CD8-positive, alpha-beta T cell (primary cell): ENCODE measurements at regions of chr19 and their contacts with region 1.

Region 1: DNA sequence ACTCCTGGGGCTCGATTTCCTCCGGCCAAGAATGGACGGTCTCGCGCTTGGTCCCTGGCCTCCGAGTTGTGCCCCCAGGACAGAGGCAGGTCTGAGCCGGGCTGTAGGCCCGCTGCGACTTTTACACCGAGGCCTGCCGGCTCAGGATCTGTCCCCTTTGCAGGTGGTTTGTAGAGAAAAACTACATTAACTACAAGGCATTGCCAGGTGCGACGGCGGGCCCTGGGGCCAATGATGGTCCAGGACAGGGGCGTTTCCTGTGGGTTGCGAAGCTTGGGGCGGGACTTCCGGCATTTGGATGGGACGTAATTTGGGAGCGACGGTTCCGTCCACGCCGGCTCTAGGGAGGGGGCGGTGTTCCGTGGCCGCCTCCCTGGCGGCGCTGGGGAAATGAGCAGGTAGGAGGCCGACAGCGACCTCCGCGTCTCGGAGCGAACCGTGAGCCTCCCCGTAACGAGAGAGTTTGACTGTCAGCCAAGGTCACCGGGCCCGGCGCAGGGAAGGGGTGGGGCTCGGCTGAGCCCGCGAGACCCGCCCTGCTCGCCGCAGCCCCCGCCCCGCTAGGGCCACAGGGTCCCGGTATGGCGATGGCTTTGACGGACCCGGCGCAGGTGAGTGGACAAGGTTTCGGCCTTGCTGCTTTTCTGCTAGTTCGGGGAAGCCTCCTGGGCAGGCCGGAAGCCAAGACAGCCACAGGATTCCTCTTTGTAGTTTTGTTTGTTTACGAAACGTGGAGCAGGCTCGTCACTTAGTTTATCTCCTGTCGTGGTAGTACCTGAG is at the start of gene ZNF805:
- DNase-seq: peak; percentile 91 to 98 (median 97)
- ATAC-seq: peak; percentile 89
- H3K4me3 ChIP-seq: peak within 1 kb of the TSS; percentile 70 to 88
- H3K4me3 Mint-ChIP-seq: peak within 1 kb of the TSS; percentile 93
- H3K27ac ChIP-seq: peak within 1 kb of the TSS; percentile 90 to 91
- H3K27ac Mint-ChIP-seq: peak within 1 kb of the TSS; percentile 97
- H3K4me1 ChIP-seq: peaks cover 20% of the 10 kb centered on the region
- H3K4me1 Mint-ChIP-seq: peaks cover 45% of the 10 kb centered on the region
- H3K27me3 ChIP-seq: no peaks in the 10 kb centered on the region
- H3K27me3 Mint-ChIP-seq: no peaks in the 10 kb centered on the region
- CTCF ChIP-seq: no peak
- total RNA-seq, gene ZNF805: 49.1 to 49.2 TPM

Region 2: GRCh38 chr19:57191141-57192076 is 49.1 kb before region 1 on chr19 and contains the start of gene ZNF264:
- CTCF ChIA-PET with region 1: no interaction called
- POLR2A ChIA-PET with region 1: interaction called, 6 read pairs
- intact Hi-C with region 1: loop called (anchors 1 kb)
- DNase-seq: peak; percentile 76 to 93 (median 90)
- ATAC-seq: peak; percentile 92
- H3K4me3 ChIP-seq: peak within 1 kb of the TSS; percentile 84
- H3K4me3 Mint-ChIP-seq: peak within 1 kb of the TSS; percentile 94
- H3K27ac ChIP-seq: peak within 1 kb of the TSS; percentile 85 to 90
- H3K27ac Mint-ChIP-seq: peak within 1 kb of the TSS; percentile 96
- H3K4me1 ChIP-seq: peaks cover 22% of the 10 kb centered on the region
- H3K4me1 Mint-ChIP-seq: peaks cover 40% of the 10 kb centered on the region
- H3K27me3 ChIP-seq: peaks cover 0 to 2% of the 10 kb centered on the region in 2 experiments
- H3K27me3 Mint-ChIP-seq: peaks cover 7% of the 10 kb centered on the region
- CTCF ChIP-seq: no peak
- total RNA-seq, gene ZNF264: 54.7 to 57.0 TPM

Region 3: GRCh38 chr19:57334191-57334590 is 93.7 kb after region 1 on chr19:
- CTCF ChIA-PET with region 1: no interaction called
- POLR2A ChIA-PET with region 1: no interaction called
- intact Hi-C with region 1: no loop called
- DNase-seq: no peak
- ATAC-seq: no peak
- H3K4me3 ChIP-seq: no peak overlapping the region
- H3K4me3 Mint-ChIP-seq: no peak overlapping the region
- H3K27ac ChIP-seq: no peak overlapping the region
- H3K27ac Mint-ChIP-seq: no peak overlapping the region
- H3K4me1 ChIP-seq: no peaks in the 10 kb centered on the region
- H3K4me1 Mint-ChIP-seq: no peaks in the 10 kb centered on the region
- H3K27me3 ChIP-seq: no peaks in the 10 kb centered on the region
- H3K27me3 Mint-ChIP-seq: no peaks in the 10 kb centered on the region
- CTCF ChIP-seq: no peak

Region 4: DNA sequence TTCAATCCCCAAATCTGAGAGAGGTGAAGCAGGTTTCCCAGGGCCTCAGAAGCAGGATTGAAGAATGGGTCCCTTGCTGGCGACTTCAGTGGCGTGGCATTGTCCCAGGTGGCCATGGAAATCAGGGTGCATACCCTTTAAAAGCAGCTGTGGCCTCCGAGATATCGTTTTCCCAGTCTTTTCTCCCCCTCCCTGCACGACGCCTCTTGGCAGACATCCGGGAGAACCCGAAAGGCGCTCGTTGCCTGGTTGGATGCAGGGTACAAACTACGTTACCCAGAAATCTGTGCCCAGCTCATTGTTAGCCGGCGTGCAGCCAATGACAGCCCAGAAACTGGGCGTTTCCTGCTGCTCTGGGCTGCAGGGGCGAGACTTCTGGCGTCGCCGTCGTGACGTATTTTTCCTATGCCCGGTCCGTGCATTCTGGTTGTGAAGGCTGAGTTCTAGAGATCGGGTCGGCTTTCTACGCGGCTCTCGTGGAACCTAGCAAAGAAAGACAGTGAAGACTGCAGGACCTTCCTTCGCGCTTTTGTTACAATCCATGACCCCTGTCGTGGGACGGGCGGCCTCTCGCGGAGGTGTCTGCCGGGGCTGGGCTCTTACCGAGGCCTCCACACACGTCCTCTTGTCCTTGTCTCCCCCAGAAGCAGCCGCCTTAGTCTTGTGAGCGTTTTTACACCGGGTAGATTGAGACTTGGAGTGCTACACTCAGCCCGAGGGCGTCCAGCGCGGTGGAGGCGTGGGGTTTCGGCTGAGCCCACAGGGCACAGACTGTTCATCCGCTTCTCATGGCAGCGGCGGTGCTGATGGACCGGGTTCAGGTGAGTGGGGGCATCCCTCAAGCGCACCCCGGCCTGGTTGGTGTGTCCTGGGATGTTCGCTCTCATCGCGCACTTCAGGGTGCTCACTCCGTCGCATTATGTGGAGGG is 110.6 kb after region 1 on chr19 and contains the start of gene ZNF304:
- CTCF ChIA-PET with region 1: no interaction called
- POLR2A ChIA-PET with region 1: no interaction called
- intact Hi-C with region 1: loop called (anchors 1 kb)
- DNase-seq: peak; percentile 58 to 93 (median 81)
- ATAC-seq: peak; percentile 99
- H3K4me3 ChIP-seq: peak within 1 kb of the TSS; percentile 79 to 87
- H3K4me3 Mint-ChIP-seq: peak within 1 kb of the TSS; percentile 96
- H3K27ac ChIP-seq: peak within 1 kb of the TSS; percentile 68 to 73
- H3K27ac Mint-ChIP-seq: peak within 1 kb of the TSS; percentile 93
- H3K4me1 ChIP-seq: peaks cover 13% of the 10 kb centered on the region
- H3K4me1 Mint-ChIP-seq: peaks cover 32% of the 10 kb centered on the region
- H3K27me3 ChIP-seq: peaks cover 0 to 4% of the 10 kb centered on the region in 2 experiments
- H3K27me3 Mint-ChIP-seq: no peaks in the 10 kb centered on the region
- CTCF ChIP-seq: no peak
- total RNA-seq, gene ZNF304: 8.6 TPM

Region 5: DNA sequence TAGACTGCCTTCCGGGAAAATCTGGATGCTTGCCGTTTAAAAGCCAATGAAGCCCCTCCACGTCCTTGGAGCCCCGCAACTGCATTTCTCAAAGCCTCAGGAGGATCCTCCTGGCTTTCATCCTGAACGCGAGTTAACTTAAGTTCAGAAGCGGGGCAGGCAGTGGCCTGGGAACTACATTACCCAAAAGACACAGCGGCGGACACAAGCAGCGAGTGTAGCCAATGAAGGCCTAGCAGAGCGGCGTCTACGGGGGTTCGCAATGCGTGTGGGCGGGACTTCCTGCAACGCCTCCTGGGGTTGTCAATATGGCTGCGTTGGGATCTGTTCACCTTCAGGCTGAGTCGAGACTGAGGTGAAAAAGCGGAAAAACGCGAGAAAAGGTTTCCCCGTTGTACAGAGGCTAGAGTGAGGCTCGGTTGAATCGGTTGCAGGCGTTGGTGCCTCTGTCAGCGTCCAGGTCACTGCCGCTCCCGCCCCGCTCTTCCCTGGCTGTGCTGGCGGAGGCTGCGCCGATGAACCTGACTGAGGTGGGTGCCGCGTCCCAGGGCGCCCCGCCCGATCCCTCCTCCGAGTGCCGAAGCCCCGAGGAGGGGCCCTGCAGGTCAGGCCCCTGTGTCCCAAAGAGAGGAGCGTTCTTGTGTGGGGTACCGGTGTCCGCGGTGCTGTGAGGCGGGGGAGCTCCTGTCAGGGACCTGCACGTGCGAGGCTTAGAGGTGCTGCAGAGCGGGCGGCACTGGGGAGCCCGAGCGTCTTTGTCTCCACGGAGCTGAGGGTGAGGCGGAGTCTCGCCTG is 170.6 kb after region 1 on chr19 and contains the start of gene ZNF17:
- CTCF ChIA-PET with region 1: no interaction called
- POLR2A ChIA-PET with region 1: no interaction called
- intact Hi-C with region 1: loop called in 1 of 2 experiments (anchors 1 kb)
- DNase-seq: peak; percentile 83 to 96 (median 91)
- ATAC-seq: peak; percentile 100
- H3K4me3 ChIP-seq: peak within 1 kb of the TSS; percentile 82 to 99
- H3K4me3 Mint-ChIP-seq: peak within 1 kb of the TSS; percentile 96
- H3K27ac ChIP-seq: peak within 1 kb of the TSS; percentile 67 to 83
- H3K27ac Mint-ChIP-seq: peak within 1 kb of the TSS; percentile 94
- H3K4me1 ChIP-seq: peaks cover 13% of the 10 kb centered on the region
- H3K4me1 Mint-ChIP-seq: peaks cover 35% of the 10 kb centered on the region
- H3K27me3 ChIP-seq: no peaks in the 10 kb centered on the region
- H3K27me3 Mint-ChIP-seq: no peaks in the 10 kb centered on the region
- CTCF ChIP-seq: no peak
- total RNA-seq, gene ZNF17: 15.5 to 18.3 TPM

Region 6: GRCh38 chr19:57613941-57614743 is 373.6 kb after region 1 on chr19 and contains the start of gene ZNF134:
- CTCF ChIA-PET with region 1: no interaction called
- POLR2A ChIA-PET with region 1: no interaction called
- intact Hi-C with region 1: loop called in 1 of 2 experiments (anchors 1 kb)
- DNase-seq: peak; percentile 77 to 94 (median 91)
- ATAC-seq: peak; percentile 99
- H3K4me3 ChIP-seq: peak within 1 kb of the TSS; percentile 78 to 90
- H3K4me3 Mint-ChIP-seq: peak within 1 kb of the TSS; percentile 90
- H3K27ac ChIP-seq: peak within 1 kb of the TSS; percentile 37 to 63
- H3K27ac Mint-ChIP-seq: peak within 1 kb of the TSS; percentile 90
- H3K4me1 ChIP-seq: peaks cover 13% of the 10 kb centered on the region
- H3K4me1 Mint-ChIP-seq: peaks cover 31% of the 10 kb centered on the region
- H3K27me3 ChIP-seq: no peaks in the 10 kb centered on the region
- H3K27me3 Mint-ChIP-seq: no peaks in the 10 kb centered on the region
- CTCF ChIP-seq: peak; percentile 16
- total RNA-seq, gene ZNF134: 35.2 to 36.5 TPM

Region 7: DNA sequence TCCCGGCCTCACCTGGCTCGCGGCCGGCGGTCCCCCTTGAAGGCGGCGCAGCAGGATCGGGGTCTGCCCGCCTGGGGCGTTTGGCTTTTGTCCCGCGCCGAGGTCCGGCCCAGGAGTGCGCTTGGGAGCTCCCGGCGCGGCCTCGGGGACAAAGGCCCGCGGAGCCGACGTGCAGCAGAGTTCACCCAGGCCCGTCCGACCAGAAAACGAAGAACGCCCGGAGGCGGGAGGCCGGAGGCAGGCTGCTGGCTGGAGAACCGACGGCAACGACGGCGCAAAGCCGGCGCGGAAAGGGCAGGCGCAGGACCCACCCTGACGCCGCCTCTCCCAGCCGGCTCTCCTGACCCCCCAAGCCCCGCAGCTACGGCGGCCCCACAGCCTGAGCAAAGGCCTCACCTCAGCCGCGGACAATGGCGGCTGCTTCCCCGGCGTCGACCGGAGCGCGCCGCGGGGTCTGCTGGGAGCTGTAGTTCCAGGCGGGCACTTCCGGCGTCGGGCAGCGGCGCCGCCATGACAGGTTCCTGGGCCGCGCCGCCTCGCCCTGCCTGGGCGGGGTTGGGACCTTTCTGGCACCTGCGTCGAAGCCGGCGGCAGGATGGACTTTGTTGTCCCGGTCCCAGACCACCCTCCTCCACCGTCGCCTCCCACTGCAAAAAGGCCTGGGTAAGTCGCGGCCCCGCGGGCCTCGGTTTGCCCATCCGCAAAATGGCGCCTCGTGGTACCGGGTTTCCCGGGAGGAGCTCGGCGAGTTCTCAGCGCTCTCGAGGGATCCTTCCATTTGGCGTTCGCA is 762.1 kb after region 1 on chr19 and contains the start of gene ZNF606:
- CTCF ChIA-PET with region 1: no interaction called
- POLR2A ChIA-PET with region 1: no interaction called
- intact Hi-C with region 1: loop called in 1 of 2 experiments (anchors 5 kb)
- DNase-seq: peak; percentile 72 to 93 (median 84)
- ATAC-seq: peak; percentile 94
- H3K4me3 ChIP-seq: peak within 1 kb of the TSS; percentile 90 to 93
- H3K4me3 Mint-ChIP-seq: peak within 1 kb of the TSS; percentile 87
- H3K27ac ChIP-seq: peak within 1 kb of the TSS; percentile 82 to 93
- H3K27ac Mint-ChIP-seq: peak within 1 kb of the TSS; percentile 94
- H3K4me1 ChIP-seq: peaks cover 20% of the 10 kb centered on the region
- H3K4me1 Mint-ChIP-seq: peaks cover 34% of the 10 kb centered on the region
- H3K27me3 ChIP-seq: no peaks in the 10 kb centered on the region
- H3K27me3 Mint-ChIP-seq: no peaks in the 10 kb centered on the region
- CTCF ChIP-seq: no peak
- total RNA-seq, gene ZNF606: 11.2 to 13.0 TPM

Region 8: GRCh38 chr19:58380722-58381466 is 1140.4 kb after region 1 on chr19 and contains the start of gene ZNF837:
- CTCF ChIA-PET with region 1: no interaction called
- POLR2A ChIA-PET with region 1: no interaction called
- intact Hi-C with region 1: loop called in 1 of 2 experiments (anchors 2 kb)
- DNase-seq: peak; percentile 94 to 100 (median 97)
- ATAC-seq: peak; percentile 82
- H3K4me3 ChIP-seq: peak within 1 kb of the TSS; percentile 62 to 92
- H3K4me3 Mint-ChIP-seq: peak within 1 kb of the TSS; percentile 98
- H3K27ac ChIP-seq: peak within 1 kb of the TSS; percentile 90 to 96
- H3K27ac Mint-ChIP-seq: peak within 1 kb of the TSS; percentile 98
- H3K4me1 ChIP-seq: peaks cover 31% of the 10 kb centered on the region
- H3K4me1 Mint-ChIP-seq: peaks cover 35% of the 10 kb centered on the region
- H3K27me3 ChIP-seq: no peaks in the 10 kb centered on the region
- H3K27me3 Mint-ChIP-seq: no peaks in the 10 kb centered on the region
- CTCF ChIP-seq: no peak
- total RNA-seq, gene ZNF837: 1.2 to 1.3 TPM